Head of caudate nucleus (tissue), 42 donors: ENCODE measurements at regions of chr10 and their contacts with region 1.

Region 1: GRCh38 chr10:68301790-68302502 is 29.9 kb upstream of the HNRNPH3 start:
- DNase-seq: peak in 5 of 42 donors; percentile 2 to 30 (median 10)

Region 2: GRCh38 chr10:68231106-68231816 is 70.7 kb before region 1 on chr10:
- intact Hi-C with region 1: loop called (anchors 10 kb)
- DNase-seq: peak; percentile 39 to 87 (median 73)

Region 3: GRCh38 chr10:68402276-68402675 is 100.3 kb after region 1 on chr10:
- intact Hi-C with region 1: no loop called
- DNase-seq: no peak